B cell (primary cell): ENCODE measurements at regions of chr10 and their contacts with region 1.

Region 1: GRCh38 chr10:88386821-88387773 is 196.0 kb downstream of the RNLS start:
- DNase-seq: peak; percentile 69
- ATAC-seq: peak; percentile 44
- H3K4me3 ChIP-seq: peak overlapping the region in 4 of 5 experiments; percentile 10 to 59 (median 38)
- H3K4me3 Mint-ChIP-seq: no peak overlapping the region
- H3K27ac ChIP-seq: peak overlapping the region; percentile 97 to 99
- H3K27ac Mint-ChIP-seq: no peak overlapping the region
- H3K4me1 ChIP-seq: peaks cover 70 to 77% of the 10 kb centered on the region in 2 donors
- H3K4me1 Mint-ChIP-seq: peaks cover 32% of the 10 kb centered on the region
- H3K27me3 ChIP-seq: no peaks in the 10 kb centered on the region
- H3K27me3 Mint-ChIP-seq: no peaks in the 10 kb centered on the region
- CTCF ChIP-seq: no peak

Region 2: GRCh38 chr10:87850742-87851205 is 536.3 kb before region 1 on chr10:
- CTCF ChIA-PET with region 1: interaction called, 241 read pairs
- POLR2A ChIA-PET with region 1: no interaction called
- intact Hi-C with region 1: no loop called
- DNase-seq: peak; percentile 66
- ATAC-seq: peak; percentile 80
- H3K4me3 ChIP-seq: no peak overlapping the region
- H3K4me3 Mint-ChIP-seq: no peak overlapping the region
- H3K27ac ChIP-seq: no peak overlapping the region
- H3K27ac Mint-ChIP-seq: no peak overlapping the region
- H3K4me1 ChIP-seq: peaks cover 0 to 4% of the 10 kb centered on the region in 2 donors
- H3K4me1 Mint-ChIP-seq: peaks cover 5% of the 10 kb centered on the region
- H3K27me3 ChIP-seq: no peaks in the 10 kb centered on the region
- H3K27me3 Mint-ChIP-seq: no peaks in the 10 kb centered on the region
- CTCF ChIP-seq: peak; percentile 54

Region 3: DNA sequence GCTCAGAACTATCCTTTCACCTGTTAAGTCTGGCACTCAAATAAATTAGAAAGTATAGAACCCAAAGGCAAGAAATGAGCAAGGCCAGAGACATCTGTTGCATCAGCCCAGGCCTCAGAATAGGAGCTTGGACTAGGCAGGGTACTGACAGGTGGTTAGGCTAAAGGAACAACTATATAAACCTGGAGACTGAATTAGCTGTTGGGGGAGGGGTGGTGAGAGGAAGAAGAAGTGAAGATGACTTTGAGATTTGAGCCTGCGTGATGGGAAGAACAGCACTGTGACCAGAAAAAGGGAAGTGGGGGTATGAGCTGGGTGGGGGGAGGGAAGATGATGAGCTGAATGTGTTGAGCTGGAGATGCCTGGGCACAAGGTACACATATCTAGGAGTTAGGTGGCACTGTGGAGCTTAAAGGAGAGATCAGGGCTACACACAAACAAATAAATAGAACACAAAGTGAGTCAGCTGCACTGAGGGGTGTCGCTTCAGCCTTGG is 278.9 kb before region 1 on chr10:
- CTCF ChIA-PET with region 1: interaction called, 111 read pairs
- POLR2A ChIA-PET with region 1: no interaction called
- intact Hi-C with region 1: loop called (anchors 1 kb)
- DNase-seq: peak; percentile 94
- ATAC-seq: peak; percentile 78
- H3K4me3 ChIP-seq: peak overlapping the region in 1 of 5 experiments; percentile 22
- H3K4me3 Mint-ChIP-seq: peak overlapping the region; percentile 59
- H3K27ac ChIP-seq: peak overlapping the region; percentile 17 to 34
- H3K27ac Mint-ChIP-seq: peak overlapping the region; percentile 81
- H3K4me1 ChIP-seq: peaks cover 80 to 87% of the 10 kb centered on the region in 2 donors
- H3K4me1 Mint-ChIP-seq: peaks cover 84% of the 10 kb centered on the region
- H3K27me3 ChIP-seq: no peaks in the 10 kb centered on the region
- H3K27me3 Mint-ChIP-seq: no peaks in the 10 kb centered on the region
- CTCF ChIP-seq: no peak

Region 4: GRCh38 chr10:88216976-88217375 is 170.1 kb before region 1 on chr10:
- CTCF ChIA-PET with region 1: interaction called, 11 read pairs
- POLR2A ChIA-PET with region 1: no interaction called
- intact Hi-C with region 1: no loop called
- DNase-seq: peak; percentile 58
- ATAC-seq: peak; percentile 69
- H3K4me3 ChIP-seq: peak overlapping the region in 1 of 5 experiments; percentile 18
- H3K4me3 Mint-ChIP-seq: peak overlapping the region; percentile 4
- H3K27ac ChIP-seq: no peak overlapping the region
- H3K27ac Mint-ChIP-seq: peak overlapping the region; percentile 71
- H3K4me1 ChIP-seq: peaks cover 11 to 12% of the 10 kb centered on the region in 2 donors
- H3K4me1 Mint-ChIP-seq: peaks cover 19% of the 10 kb centered on the region
- H3K27me3 ChIP-seq: no peaks in the 10 kb centered on the region
- H3K27me3 Mint-ChIP-seq: no peaks in the 10 kb centered on the region
- CTCF ChIP-seq: no peak

Region 5: GRCh38 chr10:88330174-88330573 is 56.9 kb before region 1 on chr10:
- CTCF ChIA-PET with region 1: interaction called, 5 read pairs
- POLR2A ChIA-PET with region 1: no interaction called
- intact Hi-C with region 1: loop called (anchors 5 kb)
- DNase-seq: peak; percentile 23
- ATAC-seq: no peak
- H3K4me3 ChIP-seq: no peak overlapping the region
- H3K4me3 Mint-ChIP-seq: no peak overlapping the region
- H3K27ac ChIP-seq: no peak overlapping the region
- H3K27ac Mint-ChIP-seq: no peak overlapping the region
- H3K4me1 ChIP-seq: peaks cover 29 to 35% of the 10 kb centered on the region in 2 donors
- H3K4me1 Mint-ChIP-seq: peaks cover 39% of the 10 kb centered on the region
- H3K27me3 ChIP-seq: no peaks in the 10 kb centered on the region
- H3K27me3 Mint-ChIP-seq: no peaks in the 10 kb centered on the region
- CTCF ChIP-seq: no peak

Region 6: GRCh38 chr10:88553116-88553752 is 166.1 kb after region 1 on chr10:
- CTCF ChIA-PET with region 1: interaction called, 11 read pairs
- POLR2A ChIA-PET with region 1: no interaction called
- intact Hi-C with region 1: loop called (anchors 2 kb)
- DNase-seq: peak; percentile 74
- ATAC-seq: peak; percentile 86
- H3K4me3 ChIP-seq: no peak overlapping the region
- H3K4me3 Mint-ChIP-seq: no peak overlapping the region
- H3K27ac ChIP-seq: no peak overlapping the region
- H3K27ac Mint-ChIP-seq: no peak overlapping the region
- H3K4me1 ChIP-seq: no peaks in the 10 kb centered on the region
- H3K4me1 Mint-ChIP-seq: no peaks in the 10 kb centered on the region
- H3K27me3 ChIP-seq: no peaks in the 10 kb centered on the region
- H3K27me3 Mint-ChIP-seq: no peaks in the 10 kb centered on the region
- CTCF ChIP-seq: peak; percentile 83